GM12878 (cell line): ENCODE measurements at regions of chr11 and their contacts with region 1.

Region 1: GRCh38 chr11:32947978-32948377 is 55.4 kb downstream of the QSER1 start:
- DNase-seq: no peak
- ATAC-seq: peak; percentile 31; the same call in 1 of the 3 replicates
- H3K4me3 ChIP-seq: no peak overlapping the region
- H3K27ac ChIP-seq: no peak overlapping the region
- H3K4me1 ChIP-seq: no peaks in the 10 kb centered on the region
- H3K27me3 ChIP-seq: no peaks in the 10 kb centered on the region
- CTCF ChIP-seq: no peak
- EP300 ChIP-seq: no peak
- POLR2A ChIP-seq: no peak
- RAD21 ChIP-seq: no peak

Region 2: DNA sequence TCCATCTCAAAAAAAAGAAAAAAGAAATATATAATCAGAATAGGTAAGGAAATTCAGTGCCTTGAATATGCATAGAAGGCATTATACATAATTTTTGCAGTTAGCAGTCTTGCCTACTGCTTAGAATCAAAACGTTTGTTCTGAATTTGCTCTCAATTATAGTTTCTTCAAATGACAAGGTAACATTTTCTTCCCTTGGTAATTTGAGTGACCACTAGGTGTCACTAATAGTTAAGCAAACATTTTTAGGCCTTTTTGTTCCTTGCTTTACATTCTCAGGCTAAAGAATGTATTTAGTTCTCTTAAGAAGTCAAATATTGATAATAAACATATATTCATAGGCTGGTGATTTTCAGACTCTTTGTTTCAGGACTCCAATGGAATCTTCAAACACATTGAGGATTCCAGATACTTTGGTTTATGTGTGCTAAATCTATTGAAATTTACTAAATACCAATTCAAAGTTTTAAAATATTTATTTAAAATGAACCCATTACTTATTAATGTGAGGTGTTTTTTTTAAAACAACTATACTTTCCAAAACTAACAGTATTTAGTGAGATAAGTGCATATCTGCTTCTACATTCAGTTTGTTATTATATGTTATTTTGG is 12.7 kb after region 1 on chr11:
- CTCF ChIA-PET with region 1: interaction called, 11 read pairs
- POLR2A ChIA-PET with region 1: no interaction called
- RAD21 ChIA-PET with region 1: no interaction called
- SMC1A ChIA-PET with region 1: no interaction called
- in situ Hi-C with region 1: no loop called
- intact Hi-C with region 1: no loop called
- DNase-seq: peak; percentile 21
- ATAC-seq: peak; percentile 65
- H3K4me3 ChIP-seq: no peak overlapping the region
- H3K27ac ChIP-seq: no peak overlapping the region
- H3K4me1 ChIP-seq: no peaks in the 10 kb centered on the region
- H3K27me3 ChIP-seq: no peaks in the 10 kb centered on the region
- CTCF ChIP-seq: peak; percentile 38 to 71 (median 59); a peak in 5 of 6 replicates
- EP300 ChIP-seq: no peak
- POLR2A ChIP-seq: no peak
- RAD21 ChIP-seq: peak; percentile 90

Region 3: GRCh38 chr11:33187998-33188722 is 240.2 kb after region 1 on chr11:
- CTCF ChIA-PET with region 1: no interaction called
- POLR2A ChIA-PET with region 1: no interaction called
- RAD21 ChIA-PET with region 1: no interaction called
- SMC1A ChIA-PET with region 1: no interaction called
- in situ Hi-C with region 1: no loop called
- intact Hi-C with region 1: no loop called
- DNase-seq: no peak
- ATAC-seq: no peak
- H3K4me3 ChIP-seq: no peak overlapping the region
- H3K27ac ChIP-seq: no peak overlapping the region
- H3K4me1 ChIP-seq: no peaks in the 10 kb centered on the region
- H3K27me3 ChIP-seq: no peaks in the 10 kb centered on the region
- CTCF ChIP-seq: no peak
- EP300 ChIP-seq: no peak
- POLR2A ChIP-seq: no peak
- RAD21 ChIP-seq: no peak